ENCODE measurements at regions of chr7 and their contacts with region 1.

Region 1: DNA sequence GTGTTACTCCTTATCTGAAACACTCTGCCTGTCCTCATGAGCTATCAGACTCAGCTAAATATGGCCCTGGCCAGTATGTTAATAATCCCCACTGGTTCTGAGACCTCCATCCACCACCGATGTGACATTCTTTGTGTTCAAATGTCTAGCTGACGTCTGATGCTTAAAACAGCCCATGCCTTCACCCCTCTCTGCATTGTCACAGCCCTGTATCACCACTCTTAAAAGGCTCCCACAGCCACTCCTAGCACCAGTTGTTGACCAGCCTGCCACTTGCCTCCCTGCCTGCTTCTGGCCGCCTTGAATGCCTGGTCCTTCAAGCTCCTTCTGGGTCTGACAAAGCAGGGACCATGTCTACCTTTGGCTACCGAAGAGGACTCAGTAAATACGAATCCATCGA is at the start of gene LMOD2:
- DNase-seq: peak; percentile 78 to 92
- ATAC-seq: peak; percentile 68 to 81
- H3K4me3 ChIP-seq: peak within 1 kb of the TSS; percentile 58 to 73 (median 71)
- H3K27ac ChIP-seq: peak within 1 kb of the TSS; percentile 88 to 96 (median 96)
- H3K4me1 ChIP-seq: peaks cover 31 to 54% of the 10 kb centered on the region in 2 donors
- H3K27me3 ChIP-seq: no peaks in the 10 kb centered on the region
- CTCF ChIP-seq: no peak
- POLR2A ChIP-seq: peak; percentile 86 to 95
- total RNA-seq, gene LMOD2: 150 to 518 (median 314) TPM

Region 2: DNA sequence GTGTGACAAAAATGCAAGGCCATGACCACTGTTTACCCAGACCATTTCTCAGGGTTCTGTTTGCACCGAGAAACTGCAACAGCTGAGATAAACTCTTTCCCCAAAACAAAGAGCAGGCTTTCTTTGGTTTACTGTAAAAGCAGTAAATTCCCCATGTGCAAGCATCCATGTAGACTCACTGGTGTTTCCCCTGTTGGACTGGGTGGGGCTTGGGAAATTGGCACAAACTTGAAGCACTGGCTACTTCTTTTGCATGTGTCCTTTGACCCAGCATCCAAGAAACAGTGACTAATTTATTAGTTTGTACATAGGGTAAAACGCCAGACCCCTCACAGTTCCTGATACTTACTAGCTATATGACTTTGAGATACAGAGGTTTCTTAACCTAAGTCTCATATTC is 133.5 kb before region 1 on chr7:
- in situ Hi-C with region 1: no loop called
- intact Hi-C with region 1: no loop called
- DNase-seq: no peak
- ATAC-seq: no peak
- H3K4me3 ChIP-seq: no peak overlapping the region
- H3K27ac ChIP-seq: no peak overlapping the region
- H3K4me1 ChIP-seq: no peaks in the 10 kb centered on the region
- H3K27me3 ChIP-seq: no peaks in the 10 kb centered on the region
- CTCF ChIP-seq: no peak
- POLR2A ChIP-seq: no peak

Region 3: DNA sequence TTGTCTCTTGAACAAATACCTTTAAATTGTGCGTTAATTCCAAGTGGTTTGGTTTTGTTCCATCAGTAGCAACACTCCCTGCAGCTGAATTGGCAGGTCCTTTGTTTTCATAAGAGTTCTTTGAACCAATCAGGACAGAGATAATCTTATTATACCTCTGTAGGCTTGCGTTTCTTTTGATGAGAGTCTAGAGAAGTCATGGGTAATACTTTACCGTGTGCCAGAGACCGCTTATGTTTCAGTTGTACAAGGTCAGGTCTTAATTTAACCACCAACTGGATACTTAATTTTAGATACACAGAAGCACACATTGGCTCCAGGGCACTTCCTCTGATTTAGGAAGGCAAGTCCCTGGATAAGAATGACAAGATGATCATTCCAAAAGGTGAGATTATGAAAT is 54.1 kb before region 1 on chr7 and contains the start of gene ASB15:
- in situ Hi-C with region 1: no loop called
- intact Hi-C with region 1: loop called (anchors 5 kb)
- DNase-seq: peak; percentile 81 to 84
- ATAC-seq: peak; percentile 96 to 98
- H3K4me3 ChIP-seq: peak within 1 kb of the TSS; percentile 33 to 48 (median 36)
- H3K27ac ChIP-seq: peak within 1 kb of the TSS; percentile 91 to 93 (median 92)
- H3K4me1 ChIP-seq: peaks cover 25 to 47% of the 10 kb centered on the region in 2 donors
- H3K27me3 ChIP-seq: no peaks in the 10 kb centered on the region
- CTCF ChIP-seq: no peak
- POLR2A ChIP-seq: peak; percentile 46 to 72
- total RNA-seq, gene ASB15: 5.3 to 26.0 (median 10.4) TPM